ENCODE measurements at regions of chr12 and their contacts with region 1.

Region 1: GRCh38 chr12:130871286-130872178 is at the start of gene RAN:
- DNase-seq: peak; percentile 86 to 93 (median 90)
- ATAC-seq: peak; percentile 92
- H3K4me3 ChIP-seq: peak within 1 kb of the TSS; percentile 68
- H3K4me3 Mint-ChIP-seq: peak within 1 kb of the TSS; percentile 85 to 98 (median 91)
- H3K27ac ChIP-seq: peak within 1 kb of the TSS; percentile 90
- H3K27ac Mint-ChIP-seq: peak within 1 kb of the TSS; percentile 86 to 98 (median 95)
- H3K4me1 ChIP-seq: peaks cover 46 to 52% of the 10 kb centered on the region in 2 donors
- H3K4me1 Mint-ChIP-seq: peaks cover 29 to 83% (median 61%) of the 10 kb centered on the region in 7 donors
- H3K27me3 ChIP-seq: no peaks in the 10 kb centered on the region
- H3K27me3 Mint-ChIP-seq: no peaks in the 10 kb centered on the region
- total RNA-seq, gene RAN: 255 to 925 (median 269) TPM

Region 2: DNA sequence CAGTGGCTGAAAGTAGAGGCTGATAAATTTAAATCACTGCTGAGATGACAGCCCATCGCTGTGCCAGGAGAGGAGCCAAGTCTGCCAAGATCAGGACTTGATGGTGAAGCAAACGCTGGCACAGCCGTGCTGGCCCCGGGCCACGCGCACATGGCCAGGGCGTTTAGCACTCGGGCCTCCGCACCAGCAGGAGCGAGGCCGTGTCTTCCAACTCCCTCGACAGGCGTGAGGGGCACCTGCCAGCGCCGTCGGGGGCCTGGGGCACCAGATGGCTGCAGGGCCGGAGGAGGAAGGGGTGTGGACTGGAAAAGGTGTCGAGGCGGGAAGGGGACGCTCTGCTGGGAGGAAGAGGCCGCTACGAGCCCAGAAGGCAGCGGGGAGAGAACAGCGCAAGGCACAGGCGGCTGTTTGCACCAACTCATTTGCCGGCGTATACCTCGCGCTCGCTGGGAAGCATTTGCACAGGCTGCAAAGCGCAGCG is 185.0 kb before region 1 on chr12:
- CTCF ChIA-PET with region 1: no interaction called
- POLR2A ChIA-PET with region 1: no interaction called
- intact Hi-C with region 1: no loop called
- DNase-seq: no peak
- ATAC-seq: no peak
- H3K4me3 ChIP-seq: no peak overlapping the region
- H3K4me3 Mint-ChIP-seq: no peak overlapping the region
- H3K27ac ChIP-seq: no peak overlapping the region
- H3K27ac Mint-ChIP-seq: no peak overlapping the region
- H3K4me1 ChIP-seq: no peaks in the 10 kb centered on the region
- H3K4me1 Mint-ChIP-seq: no peaks in the 10 kb centered on the region
- H3K27me3 ChIP-seq: no peaks in the 10 kb centered on the region
- H3K27me3 Mint-ChIP-seq: peaks cover 0 to 24% (median 5%) of the 10 kb centered on the region in 5 donors

Region 3: DNA sequence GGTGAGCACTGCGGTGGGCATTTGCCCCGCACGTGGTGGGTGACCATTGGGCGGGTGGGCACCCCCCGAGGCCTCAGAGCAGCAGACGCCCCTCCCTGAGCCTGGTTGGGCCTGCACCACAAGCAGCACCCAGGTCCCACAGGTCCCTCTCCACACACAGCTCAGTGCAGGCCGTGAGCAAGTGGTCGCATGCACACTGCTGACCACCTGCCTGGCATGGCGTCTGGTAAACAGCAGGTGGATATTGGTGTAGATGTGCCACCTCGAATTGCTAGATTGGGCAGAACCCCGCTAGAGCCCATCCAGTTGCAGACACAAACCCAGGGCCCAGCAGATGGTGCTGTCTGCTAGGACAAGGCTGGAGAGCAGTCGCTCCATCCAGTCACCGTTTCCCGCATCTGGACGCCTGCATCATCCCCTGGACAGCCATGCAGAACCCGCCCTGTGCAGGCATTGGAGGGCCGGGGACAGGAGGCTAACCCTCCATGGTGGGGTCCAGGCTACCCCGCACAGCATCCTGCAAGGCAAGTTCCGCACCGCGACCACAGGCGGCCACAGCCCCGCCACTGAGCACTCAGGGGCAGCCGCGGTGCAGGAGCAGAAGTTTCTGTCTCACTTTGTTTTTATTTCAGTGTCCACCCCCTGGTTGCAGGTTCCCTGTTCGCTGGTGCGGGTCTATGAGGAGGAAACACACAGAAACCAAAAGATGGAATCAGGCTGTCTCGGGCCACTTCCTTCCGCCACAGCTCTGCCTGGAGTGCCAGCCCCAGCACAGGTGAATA is 109.8 kb before region 1 on chr12:
- CTCF ChIA-PET with region 1: no interaction called
- POLR2A ChIA-PET with region 1: no interaction called
- intact Hi-C with region 1: loop called in 1 of 2 experiments (anchors 5 kb)
- DNase-seq: peak; percentile 21 to 62 (median 41)
- ATAC-seq: peak; percentile 68
- H3K4me3 ChIP-seq: peak overlapping the region; percentile 45
- H3K4me3 Mint-ChIP-seq: peak overlapping the region; percentile 39 to 77 (median 68)
- H3K27ac ChIP-seq: no peak overlapping the region
- H3K27ac Mint-ChIP-seq: peak overlapping the region in 1 of 9 donors; percentile 22
- H3K4me1 ChIP-seq: peaks cover 0 to 10% of the 10 kb centered on the region in 2 donors
- H3K4me1 Mint-ChIP-seq: peaks cover 5 to 18% (median 12%) of the 10 kb centered on the region in 7 donors
- H3K27me3 ChIP-seq: no peaks in the 10 kb centered on the region
- H3K27me3 Mint-ChIP-seq: peaks cover 0 to 6% (median 0%) of the 10 kb centered on the region in 5 donors

Region 4: DNA sequence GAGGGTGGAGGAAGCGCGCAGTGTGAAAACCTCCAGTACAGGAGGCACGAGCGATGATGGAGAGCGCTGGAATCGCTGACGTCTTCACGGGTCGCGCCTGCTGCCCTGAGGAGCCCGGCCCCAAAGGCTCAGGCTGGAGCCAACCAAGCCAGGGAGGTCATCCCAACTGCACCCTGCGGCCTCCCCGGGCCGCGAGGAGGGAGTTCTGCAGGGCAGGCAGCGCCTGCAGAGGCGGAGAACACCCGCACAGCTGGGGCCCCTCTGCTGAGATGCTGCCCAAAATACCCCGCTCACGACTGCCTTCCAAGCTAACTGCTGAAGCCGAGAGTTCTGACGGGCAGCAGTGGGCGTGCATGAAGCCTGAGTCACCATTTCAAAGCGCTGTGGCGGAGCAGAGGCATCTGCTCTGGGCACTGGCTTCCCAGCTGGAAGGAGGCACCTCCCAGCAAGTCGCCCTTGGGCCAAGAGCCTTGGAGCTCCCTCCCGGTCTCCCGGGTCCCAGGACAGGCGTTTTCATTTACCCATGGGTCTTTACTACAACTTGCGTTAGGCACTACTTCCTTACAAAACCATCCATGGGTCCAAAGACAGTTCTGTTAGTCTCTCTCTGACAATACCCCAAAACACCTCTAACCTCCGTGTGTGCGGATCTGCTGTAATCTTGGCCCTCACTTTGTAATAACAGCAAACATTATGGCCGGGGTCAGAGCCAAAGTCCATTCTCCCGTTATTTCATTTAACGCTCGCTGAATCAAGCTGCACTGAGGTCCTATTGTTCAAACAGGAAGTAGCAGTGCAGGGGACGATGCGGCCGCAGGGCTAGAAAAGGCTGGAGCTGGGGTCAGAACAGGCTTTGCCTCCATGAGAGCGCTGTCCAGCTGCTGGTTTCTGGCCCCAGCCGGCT is 95.3 kb before region 1 on chr12:
- CTCF ChIA-PET with region 1: no interaction called
- POLR2A ChIA-PET with region 1: no interaction called
- intact Hi-C with region 1: no loop called
- DNase-seq: peak in 5 of 9 donors; percentile 11 to 65 (median 27)
- ATAC-seq: peak; percentile 75
- H3K4me3 ChIP-seq: peak overlapping the region; percentile 57
- H3K4me3 Mint-ChIP-seq: peak overlapping the region; percentile 77 to 92 (median 84)
- H3K27ac ChIP-seq: no peak overlapping the region
- H3K27ac Mint-ChIP-seq: peak overlapping the region in 3 of 9 donors; percentile 1 to 59 (median 14)
- H3K4me1 ChIP-seq: peaks cover 3 to 8% of the 10 kb centered on the region in 2 donors
- H3K4me1 Mint-ChIP-seq: peaks cover 8 to 16% (median 12%) of the 10 kb centered on the region in 7 donors
- H3K27me3 ChIP-seq: no peaks in the 10 kb centered on the region
- H3K27me3 Mint-ChIP-seq: peaks cover 11 to 33% (median 17%) of the 10 kb centered on the region in 5 donors

Region 5: DNA sequence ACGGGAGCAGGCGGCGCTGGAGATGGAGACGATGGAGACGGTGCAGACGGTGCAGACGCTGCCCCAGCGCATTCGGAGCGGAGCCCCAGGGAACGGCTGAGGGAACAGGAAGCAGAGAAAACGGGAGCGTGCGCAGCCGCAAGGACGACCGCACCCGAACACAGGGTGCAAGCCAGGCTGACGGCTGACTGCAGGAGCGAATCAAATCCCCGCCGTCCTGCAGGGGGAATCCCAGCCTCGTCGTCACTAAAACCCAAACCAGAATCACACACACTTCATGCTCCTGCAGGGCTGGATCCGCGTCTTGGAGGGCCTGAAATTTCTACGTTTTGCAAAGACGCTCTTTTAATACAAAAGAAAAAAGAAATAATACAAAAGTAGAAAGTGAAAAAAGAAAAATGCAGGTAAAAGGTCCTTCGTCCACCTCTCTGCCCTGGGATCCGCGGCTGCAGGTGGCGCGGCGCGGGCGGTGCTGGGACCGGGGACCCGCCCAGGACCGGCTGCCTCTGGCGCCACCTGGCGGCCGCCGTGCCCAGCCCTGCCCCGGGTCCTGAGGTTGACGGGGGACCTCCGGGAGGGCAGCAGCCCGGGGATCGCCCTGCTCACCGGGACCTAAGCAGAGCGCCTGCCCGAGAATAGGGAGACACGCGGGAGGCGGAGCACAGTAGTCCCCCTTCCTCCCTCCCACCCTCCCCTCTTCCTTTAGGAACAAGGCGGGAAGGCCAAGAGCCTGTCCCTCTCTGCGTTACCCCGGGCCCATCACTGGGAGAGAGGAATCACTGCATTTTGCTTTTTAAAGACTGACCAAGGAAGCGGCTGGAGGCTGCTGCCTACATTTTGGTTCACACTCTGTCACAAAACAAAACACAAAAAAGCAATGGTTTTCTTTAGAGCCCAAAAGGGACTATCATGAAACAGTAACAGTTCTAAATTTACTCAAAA is 52.6 kb before region 1 on chr12:
- CTCF ChIA-PET with region 1: interaction called, 3 read pairs
- POLR2A ChIA-PET with region 1: no interaction called
- intact Hi-C with region 1: loop called (anchors 1 to 5 kb)
- DNase-seq: peak; percentile 54 to 90 (median 73)
- ATAC-seq: peak; percentile 97
- H3K4me3 ChIP-seq: peak overlapping the region; percentile 80
- H3K4me3 Mint-ChIP-seq: peak overlapping the region; percentile 85 to 96 (median 89)
- H3K27ac ChIP-seq: peak overlapping the region; percentile 56
- H3K27ac Mint-ChIP-seq: peak overlapping the region in 7 of 9 donors; percentile 54 to 87 (median 77)
- H3K4me1 ChIP-seq: no peaks in the 10 kb centered on the region
- H3K4me1 Mint-ChIP-seq: peaks cover 10 to 25% (median 11%) of the 10 kb centered on the region in 7 donors
- H3K27me3 ChIP-seq: no peaks in the 10 kb centered on the region
- H3K27me3 Mint-ChIP-seq: no peaks in the 10 kb centered on the region

Region 6: DNA sequence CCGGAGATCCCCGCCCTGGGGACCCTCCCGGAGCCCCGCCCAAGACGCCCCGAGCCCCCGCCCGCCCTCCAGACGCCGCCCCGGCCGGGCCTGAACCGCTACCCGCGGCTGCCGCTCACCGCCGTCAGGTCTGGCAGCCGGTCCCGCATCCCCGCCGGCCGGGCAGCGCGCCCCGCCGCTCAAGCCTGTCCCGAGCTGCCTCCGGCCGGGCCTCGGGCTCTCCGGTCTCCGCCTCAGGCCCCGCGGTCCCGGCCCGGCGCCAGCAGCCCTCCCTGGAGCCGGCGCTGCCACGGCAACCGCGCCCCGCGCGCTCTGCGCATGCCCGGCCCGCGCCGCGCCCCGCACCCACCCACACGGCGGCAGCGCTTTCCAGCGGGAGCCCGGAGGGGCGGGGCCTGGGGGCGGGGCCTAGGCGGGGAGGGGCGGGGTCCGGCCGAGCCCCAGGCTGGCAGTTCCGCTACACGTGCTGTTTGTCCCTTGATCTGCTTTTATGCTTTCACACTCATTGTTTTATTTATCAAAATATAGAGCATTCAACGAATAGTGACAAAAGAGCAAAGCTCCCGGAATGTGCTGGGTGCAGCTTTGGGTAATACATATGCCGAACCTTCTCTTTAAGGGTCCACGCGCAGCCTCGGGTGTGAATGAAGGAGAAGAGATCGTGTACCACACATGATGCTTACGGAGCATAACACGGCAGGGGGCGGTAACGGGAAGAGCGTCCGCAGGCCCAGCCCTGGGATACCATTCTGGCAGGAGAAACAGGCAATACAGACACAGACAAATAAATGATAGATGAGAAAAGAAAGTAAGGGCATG is 32.4 kb before region 1 on chr12 and contains the start of gene STX2:
- CTCF ChIA-PET with region 1: interaction called, 3 read pairs
- POLR2A ChIA-PET with region 1: interaction called, 26 read pairs
- intact Hi-C with region 1: loop called (anchors 1 kb)
- DNase-seq: peak; percentile 82 to 96 (median 92)
- ATAC-seq: peak; percentile 99
- H3K4me3 ChIP-seq: peak within 1 kb of the TSS; percentile 84
- H3K4me3 Mint-ChIP-seq: peak within 1 kb of the TSS; percentile 81 to 90 (median 84)
- H3K27ac ChIP-seq: peak within 1 kb of the TSS; percentile 65
- H3K27ac Mint-ChIP-seq: peak within 1 kb of the TSS; percentile 83 to 92 (median 90)
- H3K4me1 ChIP-seq: peaks cover 4 to 10% of the 10 kb centered on the region in 2 donors
- H3K4me1 Mint-ChIP-seq: peaks cover 12 to 38% (median 32%) of the 10 kb centered on the region in 7 donors
- H3K27me3 ChIP-seq: no peaks in the 10 kb centered on the region
- H3K27me3 Mint-ChIP-seq: no peaks in the 10 kb centered on the region
- total RNA-seq, gene STX2: 15.3 to 30.3 (median 21.5) TPM

Region 7: GRCh38 chr12:130909111-130909510 is 37.6 kb after region 1 on chr12:
- CTCF ChIA-PET with region 1: no interaction called
- POLR2A ChIA-PET with region 1: no interaction called
- intact Hi-C with region 1: no loop called
- DNase-seq: no peak
- ATAC-seq: no peak
- H3K4me3 ChIP-seq: no peak overlapping the region
- H3K4me3 Mint-ChIP-seq: no peak overlapping the region
- H3K27ac ChIP-seq: no peak overlapping the region
- H3K27ac Mint-ChIP-seq: no peak overlapping the region
- H3K4me1 ChIP-seq: no peaks in the 10 kb centered on the region
- H3K4me1 Mint-ChIP-seq: no peaks in the 10 kb centered on the region
- H3K27me3 ChIP-seq: no peaks in the 10 kb centered on the region
- H3K27me3 Mint-ChIP-seq: peaks cover 9 to 36% (median 26%) of the 10 kb centered on the region in 5 donors

Region 8: DNA sequence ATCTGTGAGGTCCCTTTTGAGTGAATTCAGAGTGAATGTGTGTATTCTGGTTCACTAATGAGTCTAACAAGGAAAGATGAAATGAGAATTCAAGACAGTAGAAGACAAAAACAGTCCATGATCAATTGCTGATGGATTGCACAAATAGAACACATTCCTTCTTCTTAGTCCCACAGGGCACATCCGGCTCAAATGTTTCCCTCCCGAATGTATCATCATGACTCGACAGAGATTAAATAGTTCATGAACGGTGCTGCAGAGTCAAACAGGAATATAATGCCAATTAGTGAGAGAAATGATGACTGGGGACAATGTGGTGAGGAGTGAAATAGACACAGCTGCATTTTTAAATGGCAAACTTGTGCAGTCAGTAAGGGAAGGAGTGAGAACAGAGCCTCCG is 827.9 kb after region 1 on chr12:
- CTCF ChIA-PET with region 1: no interaction called
- POLR2A ChIA-PET with region 1: no interaction called
- intact Hi-C with region 1: no loop called
- DNase-seq: no peak
- ATAC-seq: no peak
- H3K4me3 ChIP-seq: no peak overlapping the region
- H3K4me3 Mint-ChIP-seq: no peak overlapping the region
- H3K27ac ChIP-seq: no peak overlapping the region
- H3K27ac Mint-ChIP-seq: no peak overlapping the region
- H3K4me1 ChIP-seq: no peaks in the 10 kb centered on the region
- H3K4me1 Mint-ChIP-seq: peaks cover 0 to 2% (median 0%) of the 10 kb centered on the region in 7 donors
- H3K27me3 ChIP-seq: no peaks in the 10 kb centered on the region
- H3K27me3 Mint-ChIP-seq: peaks cover 0 to 13% (median under 1%) of the 10 kb centered on the region in 5 donors

Region 9: GRCh38 chr12:131928711-131929580 is 1057.4 kb after region 1 on chr12 and contains the start of gene PUS1:
- CTCF ChIA-PET with region 1: no interaction called
- POLR2A ChIA-PET with region 1: no interaction called
- intact Hi-C with region 1: loop called in 1 of 2 experiments (anchors 2 kb)
- DNase-seq: peak; percentile 84 to 95 (median 93)
- ATAC-seq: peak; percentile 95
- H3K4me3 ChIP-seq: peak within 1 kb of the TSS; percentile 75
- H3K4me3 Mint-ChIP-seq: peak within 1 kb of the TSS; percentile 87 to 100 (median 92)
- H3K27ac ChIP-seq: peak within 1 kb of the TSS; percentile 89
- H3K27ac Mint-ChIP-seq: peak within 1 kb of the TSS; percentile 79 to 97 (median 88)
- H3K4me1 ChIP-seq: no peaks in the 10 kb centered on the region
- H3K4me1 Mint-ChIP-seq: peaks cover 13 to 28% (median 25%) of the 10 kb centered on the region in 7 donors
- H3K27me3 ChIP-seq: no peaks in the 10 kb centered on the region
- H3K27me3 Mint-ChIP-seq: no peaks in the 10 kb centered on the region
- total RNA-seq, gene PUS1: 23.4 to 54.9 (median 49.2) TPM